ENCODE measurements at regions of chr18 and their contacts with region 1.

Region 1: GRCh38 chr18:5556310-5556974 is 12.6 kb upstream of the EPB41L3 start:
- ATAC-seq: peak in 3 of 8 experiments; percentile 56 to 63 (median 59)
- H3K4me3 ChIP-seq: no peak overlapping the region
- H3K27ac ChIP-seq: peak overlapping the region in 1 of 2 donors; percentile 49
- H3K4me1 ChIP-seq: peaks cover 13 to 29% of the 10 kb centered on the region in 2 donors

Region 2: DNA sequence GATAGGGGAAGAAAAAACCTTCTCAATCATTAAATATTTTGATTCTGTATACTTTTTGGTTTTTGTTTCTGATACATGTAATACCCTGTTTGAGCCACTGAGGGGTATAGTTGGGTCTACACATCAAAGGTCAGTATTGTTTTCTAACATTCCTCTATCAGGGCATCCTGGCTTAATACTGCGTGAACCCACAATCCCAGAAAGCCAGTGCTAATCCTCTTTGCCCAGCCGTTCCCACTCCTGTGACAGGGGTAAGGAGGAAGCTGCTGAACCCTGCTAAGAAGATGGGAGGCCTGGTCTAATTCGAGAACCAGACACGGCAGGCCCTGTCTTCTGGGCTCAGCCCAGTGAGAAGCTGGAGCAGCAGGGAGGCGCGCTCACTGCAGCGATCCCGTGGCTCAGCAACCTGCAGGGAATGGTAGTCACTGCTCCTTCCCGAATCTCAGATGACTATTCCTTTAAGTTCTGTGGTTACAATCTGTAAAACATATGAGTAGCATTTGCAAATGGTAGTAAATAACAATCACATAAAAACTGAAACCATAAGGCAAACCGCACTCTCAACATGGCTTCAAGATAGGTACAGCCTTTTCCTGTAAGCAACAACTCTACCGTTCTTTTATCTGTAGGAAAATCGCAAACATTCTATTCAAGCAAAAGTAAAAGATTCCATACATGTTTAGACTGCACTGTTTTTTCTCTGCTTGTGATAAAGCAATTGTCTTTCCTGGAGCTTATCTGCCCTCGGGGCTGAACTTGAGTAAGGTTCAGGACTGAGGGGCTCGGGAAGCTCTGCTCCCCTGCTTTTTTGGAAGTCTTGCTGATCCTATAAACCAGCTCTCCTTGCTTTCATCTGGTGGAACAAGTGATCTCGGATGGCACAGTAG is 99.6 kb before region 1 on chr18:
- in situ Hi-C with region 1: loop called in 1 of 9 experiments (anchors 25 kb)
- ATAC-seq: peak; percentile 67 to 96 (median 86)
- H3K4me3 ChIP-seq: no peak overlapping the region
- H3K27ac ChIP-seq: no peak overlapping the region
- H3K4me1 ChIP-seq: peaks cover 2 to 5% of the 10 kb centered on the region in 2 donors

Measured in motor neuron (in vitro differentiated cells).